ENCODE measurements at regions of chr17 and their contacts with region 1.

Region 1: DNA sequence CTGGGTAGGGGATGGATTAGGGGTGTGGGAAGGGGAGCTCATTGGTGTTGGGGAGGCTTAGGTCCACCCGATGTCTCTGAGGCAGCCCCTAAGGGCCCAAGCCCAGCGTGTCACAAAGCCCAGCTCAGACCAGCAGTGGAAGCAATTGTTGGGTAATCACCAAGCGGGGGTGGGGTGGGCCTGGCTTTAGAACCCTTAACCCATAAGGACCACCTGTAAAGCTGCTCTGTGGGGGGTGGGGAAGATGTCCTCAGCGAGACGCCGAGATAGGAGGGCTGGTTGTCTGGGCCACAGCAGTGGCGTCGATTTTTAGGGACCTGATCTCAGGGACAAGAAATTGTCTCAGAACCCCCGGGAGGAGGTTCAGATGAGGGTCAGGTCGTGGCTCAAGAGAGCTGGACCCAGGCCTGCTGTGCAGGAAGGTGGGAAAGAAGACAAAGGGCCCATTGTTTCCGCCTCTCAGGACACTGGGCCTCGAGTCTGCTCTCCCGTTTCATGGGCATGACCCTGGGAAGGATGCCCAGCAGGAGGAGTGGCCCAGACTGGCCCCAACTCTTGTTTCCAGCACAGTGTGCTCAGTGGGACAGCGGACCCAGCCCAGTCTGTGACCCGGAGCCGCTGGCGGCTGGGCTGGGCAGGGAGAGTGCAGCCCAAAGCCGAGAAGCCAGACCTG is 15.9 kb downstream of the ST6GALNAC2 start:
- DNase-seq: peak; percentile 46 to 74 (median 72)
- ATAC-seq: peak; percentile 53 to 71 (median 69)
- H3K4me3 ChIP-seq: no peak overlapping the region
- H3K27ac ChIP-seq: no peak overlapping the region
- H3K4me1 ChIP-seq: peaks cover 0 to 15% (median 6%) of the 10 kb centered on the region in 4 donors
- H3K27me3 ChIP-seq: no peaks in the 10 kb centered on the region
- CTCF ChIP-seq: no peak
- POLR2A ChIP-seq: no peak

Region 2: GRCh38 chr17:76523084-76524037 is 46.4 kb before region 1 on chr17:
- intact Hi-C with region 1: loop called in 1 of 2 experiments (anchors 10 kb)
- DNase-seq: peak; percentile 76 to 83 (median 77)
- ATAC-seq: peak; percentile 80 to 91 (median 87)
- H3K4me3 ChIP-seq: no peak overlapping the region
- H3K27ac ChIP-seq: no peak overlapping the region
- H3K4me1 ChIP-seq: peaks cover 0 to 24% (median 9%) of the 10 kb centered on the region in 4 donors
- H3K27me3 ChIP-seq: no peaks in the 10 kb centered on the region
- CTCF ChIP-seq: peak; percentile 99 to 100 (median 100)
- POLR2A ChIP-seq: no peak

Region 3: GRCh38 chr17:76737082-76737675 is 167.4 kb after region 1 on chr17 and contains the start of gene SRSF2:
- intact Hi-C with region 1: no loop called
- DNase-seq: peak; percentile 99
- ATAC-seq: peak; percentile 84 to 89 (median 87)
- H3K4me3 ChIP-seq: peak within 1 kb of the TSS; percentile 95 to 100 (median 97)
- H3K27ac ChIP-seq: peak within 1 kb of the TSS; percentile 96 to 99 (median 96)
- H3K4me1 ChIP-seq: peaks cover 0 to 44% (median 15%) of the 10 kb centered on the region in 4 donors
- H3K27me3 ChIP-seq: no peaks in the 10 kb centered on the region
- CTCF ChIP-seq: no peak
- POLR2A ChIP-seq: peak; percentile 100
- total RNA-seq, gene SRSF2: 62.4 to 106 (median 86.0) TPM